Mammary epithelial cell (primary cell): ENCODE measurements at regions of chr1 and their contacts with region 1.

Region 1: DNA sequence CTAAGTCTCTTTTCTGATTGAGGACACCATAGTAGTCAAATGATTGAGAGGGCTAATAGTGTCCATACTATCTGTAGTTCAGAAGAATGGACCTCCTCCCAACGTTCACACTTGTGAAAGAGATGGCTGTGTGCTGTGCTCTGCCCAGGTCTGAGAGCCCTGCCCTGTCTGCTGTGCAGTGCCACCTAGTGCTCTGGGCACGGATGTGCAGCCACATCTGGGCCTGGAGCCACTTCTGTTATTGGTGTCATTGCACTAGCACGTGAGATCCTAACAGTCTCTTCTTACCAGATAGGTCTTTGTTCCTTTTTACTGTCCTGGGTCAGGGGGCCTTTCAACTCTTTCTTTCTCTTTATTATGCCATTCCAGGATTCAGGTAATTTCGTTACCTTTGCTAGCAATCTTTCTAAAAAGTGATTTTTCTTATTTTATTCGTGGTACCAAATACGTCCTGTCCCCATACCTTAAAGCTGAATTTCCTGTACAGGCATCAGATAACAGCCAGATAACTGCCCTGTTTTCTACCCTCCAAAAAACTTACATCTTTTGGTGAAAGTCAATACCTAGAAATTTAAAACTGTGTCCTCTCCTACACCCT is 21.7 kb downstream of the INTS3 start:
- DNase-seq: peak; percentile 62
- H3K4me3 ChIP-seq: no peak overlapping the region
- H3K27ac ChIP-seq: no peak overlapping the region
- H3K4me1 ChIP-seq: no peaks in the 10 kb centered on the region
- H3K27me3 ChIP-seq: no peaks in the 10 kb centered on the region
- CTCF ChIP-seq: peak; percentile 98 to 99

Region 2: DNA sequence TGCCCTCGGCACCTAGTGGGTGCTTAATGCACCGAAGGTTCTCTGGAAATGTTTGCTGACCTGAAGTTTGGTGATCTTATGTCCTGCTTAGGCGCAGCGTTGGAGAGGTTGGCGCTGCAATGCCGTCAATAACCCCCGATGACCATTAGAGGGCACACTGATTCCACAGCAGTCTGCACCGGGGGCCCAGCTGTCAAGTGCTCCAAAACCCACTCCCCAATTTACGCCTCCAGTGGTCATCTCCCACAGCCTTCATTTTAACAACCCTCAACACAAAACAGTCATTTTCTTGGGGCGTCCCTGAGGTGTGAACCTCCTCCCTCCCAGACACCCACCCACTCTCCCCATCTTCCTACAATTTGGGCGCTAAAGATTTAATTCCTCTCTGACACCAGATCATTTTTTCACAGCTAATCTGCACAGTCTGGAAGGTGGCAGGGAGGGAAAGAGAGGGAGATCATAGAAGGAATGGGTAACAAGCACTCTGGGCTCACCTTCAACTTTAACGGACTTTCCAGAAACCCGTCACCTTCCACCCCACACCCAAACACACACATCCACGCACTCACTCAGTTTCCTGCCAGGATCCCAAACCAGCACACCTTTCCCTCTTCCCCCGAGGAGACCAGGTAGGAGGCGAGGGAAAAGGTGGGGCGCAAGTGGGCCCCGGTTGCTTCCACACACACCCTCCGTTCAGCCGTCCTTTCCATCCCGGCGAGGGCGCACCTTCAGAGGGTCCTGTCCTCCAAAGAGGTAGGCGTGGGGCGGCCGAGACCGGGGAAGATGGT is 71.6 kb before region 1 on chr1:
- CTCF ChIA-PET with region 1: no interaction called
- dilution Hi-C with region 1: no loop called
- in situ Hi-C with region 1: loop called (anchors 5 to 10 kb)
- intact Hi-C with region 1: loop called (anchors 1 kb)
- DNase-seq: peak; percentile 29
- H3K4me3 ChIP-seq: peak overlapping the region; percentile 25 to 42 (median 30)
- H3K27ac ChIP-seq: no peak overlapping the region
- H3K4me1 ChIP-seq: peaks cover 19% of the 10 kb centered on the region
- H3K27me3 ChIP-seq: peaks cover 22% of the 10 kb centered on the region
- CTCF ChIP-seq: peak; percentile 91 to 95

Region 3: GRCh38 chr1:153727463-153728304 is 21.8 kb before region 1 on chr1 and contains the start of gene INTS3:
- CTCF ChIA-PET with region 1: no interaction called
- dilution Hi-C with region 1: no loop called
- in situ Hi-C with region 1: no loop called
- intact Hi-C with region 1: loop called (anchors 1 kb)
- DNase-seq: peak; percentile 100
- H3K4me3 ChIP-seq: peak within 1 kb of the TSS; percentile 80 to 95 (median 87)
- H3K27ac ChIP-seq: peak within 1 kb of the TSS; percentile 83
- H3K4me1 ChIP-seq: peaks cover 13% of the 10 kb centered on the region
- H3K27me3 ChIP-seq: no peaks in the 10 kb centered on the region
- CTCF ChIP-seq: peak in 1 of 2 donors; percentile 18
- total RNA-seq, gene INTS3: 32.8 to 45.6 TPM